OCI-LY7 (cell line): ENCODE measurements at regions of chr6 and their contacts with region 1.

Region 1: GRCh38 chr6:3125815-3126214 is 7.3 kb downstream of the BPHL start:
- DNase-seq: no peak
- H3K4me3 ChIP-seq: no peak overlapping the region
- H3K27ac ChIP-seq: no peak overlapping the region
- H3K4me1 ChIP-seq: peaks cover 25% of the 10 kb centered on the region
- CTCF ChIP-seq: no peak

Region 2: DNA sequence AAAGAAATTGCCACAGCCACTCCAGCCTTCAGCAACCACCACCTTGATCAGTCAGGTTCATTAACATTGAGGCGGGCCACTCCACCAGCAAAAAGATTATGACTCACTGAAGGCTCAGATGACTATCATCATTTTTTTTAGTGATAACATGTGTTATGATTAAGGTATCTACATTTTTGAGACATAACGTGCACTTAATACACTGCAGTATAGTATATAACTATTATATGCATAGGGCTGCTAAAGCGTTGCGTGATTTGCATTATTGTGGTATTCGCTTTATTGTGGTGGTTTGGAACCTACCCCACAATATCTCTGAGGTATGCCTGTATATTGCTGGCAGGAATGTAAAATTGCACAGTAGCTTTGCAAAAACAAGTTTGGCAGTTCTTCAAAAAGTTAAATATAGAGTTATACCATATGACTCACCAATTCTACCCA is 64.3 kb before region 1 on chr6:
- CTCF ChIA-PET with region 1: no interaction called
- POLR2A ChIA-PET with region 1: no interaction called
- intact Hi-C with region 1: no loop called
- DNase-seq: peak; percentile 17
- H3K4me3 ChIP-seq: peak overlapping the region; percentile 1
- H3K27ac ChIP-seq: no peak overlapping the region
- H3K4me1 ChIP-seq: peaks cover 23% of the 10 kb centered on the region
- CTCF ChIP-seq: no peak

Region 3: DNA sequence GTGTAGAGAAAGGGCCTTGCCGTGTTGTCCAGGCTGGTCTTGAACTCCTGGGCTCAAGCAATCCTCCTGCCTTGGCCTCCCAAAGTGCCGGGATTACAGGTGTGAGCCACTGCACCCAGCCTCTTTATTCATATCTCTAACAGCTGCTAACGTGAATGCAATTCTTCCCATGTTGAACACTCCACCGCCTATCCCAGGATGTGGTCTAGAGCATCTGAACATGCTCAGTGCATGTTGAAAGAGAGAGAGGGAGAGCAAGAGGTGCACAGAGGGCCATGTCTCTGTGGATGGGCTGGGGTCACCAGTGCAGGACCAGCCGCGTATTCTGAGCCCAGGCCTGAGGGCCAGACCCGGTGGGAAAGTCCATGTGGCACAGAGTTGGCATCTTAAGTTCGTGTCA is 18.8 kb after region 1 on chr6:
- CTCF ChIA-PET with region 1: no interaction called
- POLR2A ChIA-PET with region 1: no interaction called
- intact Hi-C with region 1: no loop called
- DNase-seq: no peak
- H3K4me3 ChIP-seq: no peak overlapping the region
- H3K27ac ChIP-seq: no peak overlapping the region
- H3K4me1 ChIP-seq: peaks cover 4% of the 10 kb centered on the region
- CTCF ChIP-seq: no peak

Region 4: GRCh38 chr6:3209114-3210023 is 83.6 kb after region 1 on chr6:
- CTCF ChIA-PET with region 1: no interaction called
- POLR2A ChIA-PET with region 1: no interaction called
- intact Hi-C with region 1: loop called (anchors 2 kb)
- DNase-seq: peak; percentile 42
- H3K4me3 ChIP-seq: no peak overlapping the region
- H3K27ac ChIP-seq: no peak overlapping the region
- H3K4me1 ChIP-seq: peaks cover 21% of the 10 kb centered on the region
- CTCF ChIP-seq: no peak

Region 5: GRCh38 chr6:3251462-3252314 is 125.9 kb after region 1 on chr6:
- CTCF ChIA-PET with region 1: interaction called, 3 read pairs
- POLR2A ChIA-PET with region 1: interaction called, 4 read pairs
- intact Hi-C with region 1: loop called (anchors 1 kb)
- DNase-seq: peak; percentile 70
- H3K4me3 ChIP-seq: no peak overlapping the region
- H3K27ac ChIP-seq: no peak overlapping the region
- H3K4me1 ChIP-seq: no peaks in the 10 kb centered on the region
- CTCF ChIP-seq: peak; percentile 95

Region 6: DNA sequence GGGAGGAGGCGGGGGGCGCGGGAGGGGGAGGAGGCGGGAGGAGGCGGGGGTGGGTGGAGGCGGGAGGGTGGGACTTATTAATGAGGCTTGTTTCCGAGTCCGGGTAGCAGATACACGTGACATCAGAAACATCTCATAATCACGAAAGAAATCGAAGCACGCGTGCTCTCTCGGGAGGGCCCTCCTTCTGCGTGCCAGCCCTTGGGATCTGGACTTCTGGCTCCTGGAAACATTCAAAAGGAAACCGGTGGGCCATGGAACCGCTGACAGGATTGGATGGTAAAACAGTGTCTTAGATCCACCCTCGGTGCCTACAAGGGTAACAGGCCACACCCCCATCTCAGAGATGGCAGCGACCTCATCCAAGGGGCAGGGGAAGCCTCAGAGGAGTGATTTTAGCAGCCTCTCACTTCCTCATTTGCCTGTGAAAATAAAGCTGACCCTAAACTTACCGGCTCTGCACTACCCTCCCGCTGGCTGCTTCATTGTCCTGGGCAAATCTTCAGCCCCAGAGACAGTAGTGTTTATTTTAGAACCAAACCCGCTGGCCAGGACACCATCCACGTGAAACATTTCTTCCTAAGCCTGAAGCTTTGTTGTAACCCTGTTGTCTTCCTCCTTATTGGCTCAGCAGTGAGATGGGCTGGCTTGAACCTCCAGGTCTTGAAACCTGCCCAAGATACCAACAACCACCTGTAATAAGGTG is 230.4 kb after region 1 on chr6:
- CTCF ChIA-PET with region 1: no interaction called
- POLR2A ChIA-PET with region 1: no interaction called
- intact Hi-C with region 1: loop called (anchors 10 kb)
- DNase-seq: peak; percentile 95
- H3K4me3 ChIP-seq: peak overlapping the region; percentile 66
- H3K27ac ChIP-seq: peak overlapping the region; percentile 84
- H3K4me1 ChIP-seq: peaks cover 57% of the 10 kb centered on the region
- CTCF ChIP-seq: no peak